Left cardiac atrium (tissue), 4 donors: ENCODE measurements at regions of chr4 and their contacts with region 1.

Region 1: GRCh38 chr4:125314676-125315575 is at the start of gene FAT4:
- DNase-seq: peak; percentile 97
- ATAC-seq: peak; percentile 94 to 96
- total RNA-seq, gene FAT4: 10.3 to 12.3 TPM

Region 2: GRCh38 chr4:125097729-125098128 is 217.2 kb before region 1 on chr4:
- intact Hi-C with region 1: no loop called
- DNase-seq: no peak
- ATAC-seq: no peak

Region 3: DNA sequence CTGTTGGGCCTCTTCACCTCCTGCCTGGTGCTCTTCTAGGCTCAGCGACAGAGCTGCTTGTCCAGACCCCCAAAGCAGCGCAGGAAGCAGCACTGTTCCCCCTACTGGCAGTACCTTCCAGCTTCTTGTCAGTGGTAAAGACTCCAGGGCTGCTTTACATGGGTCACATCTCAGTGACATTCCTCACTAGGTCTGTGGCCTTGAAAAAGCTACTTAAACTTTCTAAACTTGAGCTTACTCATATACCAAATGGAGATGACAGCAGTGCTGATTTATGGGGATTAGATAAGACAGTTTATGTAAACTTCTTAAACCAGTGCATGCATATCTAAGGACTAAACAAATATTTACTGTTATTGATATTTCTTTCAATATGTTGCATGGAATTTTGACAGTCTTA is 117.2 kb after region 1 on chr4:
- intact Hi-C with region 1: loop called in 1 of 2 experiments (anchors 5 kb)
- DNase-seq: no peak
- ATAC-seq: peak; percentile 30 to 38

Region 4: DNA sequence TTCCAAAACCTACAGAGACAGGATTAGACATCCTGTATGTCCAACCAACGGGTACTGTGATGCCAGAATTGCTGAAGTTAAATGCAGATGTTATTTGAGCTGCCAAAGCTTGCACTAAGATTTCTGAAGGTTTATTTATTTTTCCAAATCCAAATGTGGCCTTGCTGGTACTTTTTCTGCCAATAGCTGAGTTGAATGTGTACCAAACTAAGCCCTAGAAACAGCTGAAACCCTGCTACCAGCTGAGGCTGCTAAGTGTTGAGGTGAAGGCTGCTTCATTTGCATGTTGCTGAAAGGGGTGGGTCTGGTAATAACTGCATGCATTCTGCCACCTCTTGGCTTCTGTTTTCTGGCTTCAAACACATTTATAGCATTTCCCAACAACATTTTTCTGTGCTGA is 366.3 kb after region 1 on chr4:
- intact Hi-C with region 1: no loop called
- DNase-seq: no peak
- ATAC-seq: no peak

Region 5: DNA sequence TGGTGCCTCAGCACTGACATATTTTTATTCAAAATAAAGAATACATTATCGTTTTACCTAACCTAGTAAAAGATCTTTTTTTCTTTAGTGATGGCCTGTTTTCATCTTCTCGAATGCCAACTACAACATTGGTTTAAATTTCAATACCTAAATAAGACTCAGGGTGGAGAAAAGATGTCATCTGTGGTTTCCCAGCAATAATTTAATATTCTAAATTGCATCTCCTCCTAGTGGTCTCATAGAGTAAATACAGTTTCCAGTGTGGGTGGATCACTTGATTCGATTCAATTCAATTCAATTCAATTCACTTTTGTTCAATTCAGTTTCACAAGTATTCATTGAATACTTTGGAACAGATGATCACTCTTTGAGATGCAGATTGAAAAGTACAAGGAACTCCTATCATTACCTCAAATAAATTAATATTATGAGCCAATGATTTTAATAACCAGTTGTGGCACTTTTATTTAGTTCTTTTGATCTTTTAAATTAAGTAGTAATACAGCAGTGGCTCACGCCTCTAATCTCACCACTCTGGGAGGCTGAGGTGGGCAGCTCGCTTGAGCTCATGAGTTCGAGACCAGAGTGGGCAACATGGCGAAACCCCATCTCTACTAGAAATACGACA is 427.0 kb after region 1 on chr4:
- intact Hi-C with region 1: loop called (anchors 2 to 5 kb)
- DNase-seq: no peak
- ATAC-seq: no peak

Region 6: DNA sequence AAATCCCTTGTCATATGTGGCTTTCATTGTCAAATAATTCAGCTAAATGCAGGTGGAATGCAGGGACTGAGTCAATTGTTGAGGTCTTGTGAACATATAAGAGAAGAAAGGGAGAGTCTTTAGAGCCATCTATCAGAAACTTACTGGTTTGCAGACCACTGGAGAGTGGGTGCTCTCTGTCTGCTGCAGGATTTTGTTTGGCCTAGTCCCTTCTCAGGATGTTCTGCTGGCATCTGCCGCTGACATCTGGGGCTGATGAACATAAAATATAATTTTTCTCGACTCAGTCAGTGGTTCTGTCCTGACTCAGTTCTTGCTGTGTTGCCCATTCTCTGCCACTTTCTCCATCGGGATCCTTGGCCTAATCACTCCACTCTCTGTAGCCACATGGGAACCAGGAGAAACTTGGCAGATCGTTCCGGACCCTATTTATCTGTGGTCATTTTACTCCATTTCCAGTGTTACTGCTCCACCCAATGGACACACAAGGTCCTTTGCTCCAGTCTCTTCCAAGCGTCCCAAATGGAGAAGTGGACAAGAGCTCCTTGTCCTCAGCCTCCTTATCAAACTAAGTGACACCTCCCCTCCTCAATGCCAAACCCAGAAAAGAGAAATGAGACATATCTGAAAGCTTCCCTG is 436.0 kb after region 1 on chr4:
- intact Hi-C with region 1: loop called (anchors 1 to 5 kb)
- DNase-seq: peak; percentile 40
- ATAC-seq: peak; percentile 92 to 96